Heart right ventricle (tissue), 16 donors: ENCODE measurements at regions of chr17 and their contacts with region 1.

Region 1: DNA sequence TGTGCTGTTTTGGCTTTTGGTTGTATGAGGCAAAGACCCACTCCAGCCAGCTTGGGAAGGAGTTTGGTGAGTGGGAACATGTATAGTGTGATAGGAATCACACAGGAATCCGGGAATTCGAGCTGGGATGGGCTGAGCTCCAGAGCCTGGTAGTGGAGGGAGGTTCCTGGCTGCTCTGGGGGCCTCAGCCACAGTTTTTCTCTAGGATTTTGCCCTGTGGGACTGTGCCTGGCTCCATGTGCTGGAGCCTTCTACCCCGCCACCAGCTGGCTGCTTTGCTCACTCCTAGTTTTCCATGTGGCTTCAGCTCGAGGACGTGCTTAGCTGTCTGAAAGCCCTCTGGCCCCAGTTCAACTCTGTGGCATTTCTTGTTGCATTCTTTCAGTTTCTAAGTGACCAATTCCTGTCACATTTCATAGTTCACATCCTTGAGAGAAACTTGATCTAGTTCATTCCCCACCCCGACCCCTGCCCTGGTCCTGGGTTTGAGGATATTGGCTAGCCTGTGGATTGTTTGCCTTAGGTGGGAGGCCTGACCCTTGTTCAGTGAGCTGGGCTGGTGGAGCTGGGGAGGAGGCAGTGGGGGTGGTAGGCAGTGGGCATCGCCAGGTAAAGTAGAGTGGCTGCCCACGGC is 5.0 kb downstream of the SEC14L1 start:
- DNase-seq: peak; percentile 46 to 75
- ATAC-seq: peak; percentile 19 to 68 (median 55)
- H3K4me3 ChIP-seq: peak overlapping the region; percentile 18 to 91 (median 74)
- H3K27ac ChIP-seq: peak overlapping the region; percentile 69 to 96 (median 92)
- H3K4me1 ChIP-seq: peaks cover 11 to 89% (median 52%) of the 10 kb centered on the region in 9 donors
- H3K27me3 ChIP-seq: no peaks in the 10 kb centered on the region
- CTCF ChIP-seq: peak in 5 of 9 donors; percentile 17 to 57 (median 42)

Region 2: GRCh38 chr17:76585818-76586593 is 559.7 kb before region 1 on chr17 and contains the start of gene ST6GALNAC2:
- intact Hi-C with region 1: no loop called
- DNase-seq: peak; percentile 45 to 69
- ATAC-seq: peak; percentile 90 to 95 (median 94)
- H3K4me3 ChIP-seq: peak within 1 kb of the TSS; percentile 56 to 73 (median 65)
- H3K27ac ChIP-seq: peak within 1 kb of the TSS in 9 of 10 donors; percentile 5 to 82 (median 53)
- H3K4me1 ChIP-seq: peaks cover 3 to 26% (median 21%) of the 10 kb centered on the region in 9 donors
- H3K27me3 ChIP-seq: peaks cover 0 to 57% (median 15%) of the 10 kb centered on the region in 7 donors
- CTCF ChIP-seq: peak in 8 of 9 donors; percentile 20 to 65 (median 44)
- total RNA-seq, gene ST6GALNAC2: 3.7 to 8.4 (median 6.1) TPM

Region 3: GRCh38 chr17:77214743-77215142 is 69.0 kb after region 1 on chr17:
- intact Hi-C with region 1: loop called in 7 of 10 experiments (anchors 5 to 10 kb)
- DNase-seq: peak in 1 of 2 donors; percentile 54
- ATAC-seq: peak; percentile 33 to 79 (median 68)
- H3K4me3 ChIP-seq: no peak overlapping the region
- H3K27ac ChIP-seq: peak overlapping the region in 1 of 10 donors; percentile 24
- H3K4me1 ChIP-seq: peaks cover 7 to 68% (median 30%) of the 10 kb centered on the region in 9 donors
- H3K27me3 ChIP-seq: no peaks in the 10 kb centered on the region
- CTCF ChIP-seq: peak in 8 of 9 donors; percentile 18 to 69 (median 54)

Region 4: DNA sequence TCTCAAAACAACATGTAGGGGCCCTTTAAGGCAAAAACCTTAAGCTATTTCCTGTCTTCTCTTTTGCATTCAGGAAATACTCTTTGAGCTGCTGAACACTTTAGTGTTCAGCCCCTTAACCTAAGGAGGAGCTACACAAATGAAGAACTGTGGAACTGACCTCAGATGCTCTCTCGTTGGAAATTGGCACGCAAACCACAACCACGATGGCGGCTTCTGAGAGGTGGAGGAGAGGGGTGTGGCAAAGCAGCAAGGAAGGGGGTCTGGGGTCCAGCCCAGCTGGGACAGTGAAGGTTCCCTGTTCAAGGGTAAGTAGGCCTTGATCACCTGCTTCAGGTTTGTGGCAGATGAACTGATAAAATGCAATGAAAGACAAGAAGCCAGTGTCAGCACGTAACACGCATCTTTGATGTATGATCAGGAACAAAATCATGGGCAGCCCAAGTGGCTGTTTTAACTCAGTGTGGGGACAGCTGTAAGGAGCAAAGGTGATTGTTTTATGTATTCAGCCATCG is 521.2 kb after region 1 on chr17:
- intact Hi-C with region 1: no loop called
- DNase-seq: no peak
- ATAC-seq: no peak
- H3K4me3 ChIP-seq: peak overlapping the region in 1 of 10 donors; percentile 19
- H3K27ac ChIP-seq: peak overlapping the region in 1 of 10 donors; percentile 55
- H3K4me1 ChIP-seq: peaks cover 0 to 9% (median 0%) of the 10 kb centered on the region in 9 donors
- H3K27me3 ChIP-seq: no peaks in the 10 kb centered on the region
- CTCF ChIP-seq: no peak